CD14-positive monocyte (primary cell): ENCODE measurements at regions of chr20 and their contacts with region 1.

Region 1: DNA sequence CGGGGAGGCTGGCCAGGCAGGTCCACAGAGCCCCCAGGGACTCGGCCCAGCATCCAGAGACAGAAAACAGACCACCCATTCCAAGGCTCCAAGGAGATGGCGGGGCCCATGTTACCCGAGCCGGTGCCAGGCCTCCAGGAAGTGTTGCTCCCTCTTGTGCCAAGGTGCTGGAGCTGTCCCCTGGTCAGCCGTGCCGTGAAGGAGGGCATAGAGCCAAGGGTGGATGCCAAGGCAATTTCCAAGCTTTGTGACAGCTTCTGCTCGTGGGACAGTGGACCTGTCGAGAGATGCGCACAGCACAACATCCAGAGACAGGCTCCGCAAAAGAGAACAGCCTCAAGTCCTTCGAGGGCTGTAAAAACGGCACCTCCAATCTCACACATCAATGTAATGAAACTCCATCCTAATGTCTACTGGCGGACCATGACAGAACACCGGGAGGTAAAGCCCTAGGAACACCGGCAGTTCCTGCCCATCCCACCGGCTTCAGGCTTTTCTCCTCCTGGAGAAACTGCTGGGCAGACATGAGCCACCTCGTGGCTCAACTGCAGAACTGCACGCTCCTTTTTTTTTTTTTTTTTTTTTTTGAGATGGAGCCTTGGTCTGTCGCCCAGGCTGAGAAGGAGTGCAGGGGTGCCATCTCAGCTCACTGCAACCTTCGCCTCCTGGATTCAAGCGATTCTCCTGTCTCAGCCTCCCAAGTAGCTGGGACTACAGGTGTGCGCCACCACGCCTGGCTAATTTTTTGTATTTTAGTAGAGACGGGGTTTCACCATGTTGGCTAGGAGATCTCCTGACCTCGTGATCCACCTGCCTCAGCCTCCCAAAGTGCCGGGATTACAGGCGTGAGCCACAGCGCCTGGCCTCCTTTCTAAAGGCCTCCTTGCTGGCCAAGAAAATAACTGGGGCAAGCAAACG is 30.9 kb upstream of the AVP start:
- DNase-seq: peak; percentile 16 to 47 (median 41)
- H3K4me3 ChIP-seq: no peak overlapping the region
- H3K4me3 Mint-ChIP-seq: no peak overlapping the region
- H3K27ac ChIP-seq: no peak overlapping the region
- H3K27ac Mint-ChIP-seq: no peak overlapping the region
- H3K4me1 ChIP-seq: peaks cover 10 to 12% of the 10 kb centered on the region in 2 donors
- H3K4me1 Mint-ChIP-seq: peaks cover 24% of the 10 kb centered on the region
- H3K27me3 ChIP-seq: no peaks in the 10 kb centered on the region
- H3K27me3 Mint-ChIP-seq: peaks cover 0 to 2% (median 0%) of the 10 kb centered on the region in 3 donors
- CTCF ChIP-seq: peak; percentile 93

Region 2: DNA sequence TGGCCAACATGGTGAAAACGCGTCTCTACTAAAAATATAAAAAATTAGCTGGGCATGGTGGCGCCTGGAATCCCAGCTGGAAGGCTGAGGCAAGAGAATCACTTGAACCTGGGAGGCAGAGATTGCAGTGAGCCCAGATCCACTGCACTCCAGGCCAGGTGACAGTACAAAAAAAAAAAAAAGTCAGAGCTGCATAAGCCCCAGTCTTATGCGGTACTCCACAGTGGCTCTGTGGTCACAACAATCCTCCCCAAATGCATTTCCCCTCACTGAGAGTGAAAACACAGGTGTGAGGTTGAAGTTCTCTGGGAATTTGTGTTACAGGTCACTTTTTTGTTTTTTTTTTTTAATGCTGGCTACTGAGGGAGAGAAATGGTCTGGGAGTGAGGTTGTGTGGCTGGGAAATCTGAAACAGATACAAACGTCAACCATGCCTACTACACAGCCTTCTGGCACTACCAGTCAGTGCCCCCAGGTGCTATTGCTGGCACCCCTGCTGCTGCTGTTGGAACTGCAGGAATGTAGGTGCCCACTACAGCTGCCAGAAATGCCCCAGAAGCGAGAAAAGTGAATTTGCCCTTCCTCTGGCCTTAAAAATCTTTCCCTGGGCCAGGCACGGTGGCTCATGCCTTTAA is 63.9 kb before region 1 on chr20:
- intact Hi-C with region 1: loop called (anchors 2 to 5 kb)
- DNase-seq: no peak
- H3K4me3 ChIP-seq: no peak overlapping the region
- H3K4me3 Mint-ChIP-seq: no peak overlapping the region
- H3K27ac ChIP-seq: no peak overlapping the region
- H3K27ac Mint-ChIP-seq: no peak overlapping the region
- H3K4me1 ChIP-seq: peaks cover 6 to 8% of the 10 kb centered on the region in 2 donors
- H3K4me1 Mint-ChIP-seq: peaks cover 10% of the 10 kb centered on the region
- H3K27me3 ChIP-seq: no peaks in the 10 kb centered on the region
- H3K27me3 Mint-ChIP-seq: peaks cover 0 to 1% (median 0%) of the 10 kb centered on the region in 3 donors
- CTCF ChIP-seq: no peak